Mammary epithelial cell (primary cell): ENCODE measurements at regions of chr2 and their contacts with region 1.

Region 1: GRCh38 chr2:208619993-208620392 is 213.4 kb downstream of the PTH2R start:
- DNase-seq: no peak
- H3K4me3 ChIP-seq: no peak overlapping the region
- H3K27ac ChIP-seq: no peak overlapping the region
- H3K4me1 ChIP-seq: no peaks in the 10 kb centered on the region
- H3K27me3 ChIP-seq: no peaks in the 10 kb centered on the region
- CTCF ChIP-seq: no peak

Region 2: GRCh38 chr2:207828361-207829057 is 791.5 kb before region 1 on chr2:
- CTCF ChIA-PET with region 1: interaction called, 10 read pairs
- dilution Hi-C with region 1: no loop called
- in situ Hi-C with region 1: no loop called
- intact Hi-C with region 1: no loop called
- DNase-seq: peak; percentile 29
- H3K4me3 ChIP-seq: no peak overlapping the region
- H3K27ac ChIP-seq: no peak overlapping the region
- H3K4me1 ChIP-seq: peaks cover 9% of the 10 kb centered on the region
- H3K27me3 ChIP-seq: no peaks in the 10 kb centered on the region
- CTCF ChIP-seq: no peak

Region 3: GRCh38 chr2:208671284-208671683 is 51.3 kb after region 1 on chr2:
- CTCF ChIA-PET with region 1: no interaction called
- dilution Hi-C with region 1: loop called (anchors 5 kb)
- in situ Hi-C with region 1: no loop called
- intact Hi-C with region 1: no loop called
- DNase-seq: no peak
- H3K4me3 ChIP-seq: no peak overlapping the region
- H3K27ac ChIP-seq: no peak overlapping the region
- H3K4me1 ChIP-seq: no peaks in the 10 kb centered on the region
- H3K27me3 ChIP-seq: no peaks in the 10 kb centered on the region
- CTCF ChIP-seq: no peak